Heart right ventricle (tissue), 16 donors: ENCODE measurements at regions of chr19 and their contacts with region 1.

Region 1: GRCh38 chr19:30630289-30631079 is 258.3 kb downstream of the ZNF536 start:
- DNase-seq: no peak
- ATAC-seq: no peak
- H3K4me3 ChIP-seq: no peak overlapping the region
- H3K27ac ChIP-seq: no peak overlapping the region
- H3K4me1 ChIP-seq: no peaks in the 10 kb centered on the region
- H3K27me3 ChIP-seq: no peaks in the 10 kb centered on the region
- CTCF ChIP-seq: no peak

Region 2: GRCh38 chr19:29745253-29745652 is 885.2 kb before region 1 on chr19:
- intact Hi-C with region 1: loop called in 1 of 10 experiments (anchors 10 kb)
- DNase-seq: no peak
- ATAC-seq: no peak
- H3K4me3 ChIP-seq: no peak overlapping the region
- H3K27ac ChIP-seq: no peak overlapping the region
- H3K4me1 ChIP-seq: no peaks in the 10 kb centered on the region
- H3K27me3 ChIP-seq: peaks cover 0 to 34% (median 0%) of the 10 kb centered on the region in 7 donors
- CTCF ChIP-seq: no peak